H1 (cell line): ENCODE measurements at regions of chr1 and their contacts with region 1.

Region 1: GRCh38 chr1:35646043-35646442 is 4.7 kb upstream of the PSMB2 start:
- DNase-seq: no peak
- H3K4me3 ChIP-seq: no peak overlapping the region
- H3K27ac ChIP-seq: no peak overlapping the region
- H3K4me1 ChIP-seq: no peaks in the 10 kb centered on the region
- H3K27me3 ChIP-seq: no peaks in the 10 kb centered on the region
- CTCF ChIP-seq: peak in 2 of 3 experiments; percentile 23 to 48; a peak in 1 of 4 replicates
- EP300 ChIP-seq: no peak
- POLR2A ChIP-seq: no peak
- RAD21 ChIP-seq: peak; percentile 32 to 48

Region 2: GRCh38 chr1:35488336-35488735 is 157.7 kb before region 1 on chr1:
- CTCF ChIA-PET with region 1: no interaction called
- POLR2A ChIA-PET with region 1: no interaction called
- DNase-seq: no peak
- H3K4me3 ChIP-seq: no peak overlapping the region
- H3K27ac ChIP-seq: no peak overlapping the region
- H3K4me1 ChIP-seq: no peaks in the 10 kb centered on the region
- H3K27me3 ChIP-seq: no peaks in the 10 kb centered on the region
- CTCF ChIP-seq: no peak
- EP300 ChIP-seq: no peak
- POLR2A ChIP-seq: no peak
- RAD21 ChIP-seq: no peak

Region 3: GRCh38 chr1:35595684-35596083 is 50.4 kb before region 1 on chr1:
- CTCF ChIA-PET with region 1: no interaction called
- POLR2A ChIA-PET with region 1: no interaction called
- DNase-seq: no peak
- H3K4me3 ChIP-seq: no peak overlapping the region
- H3K27ac ChIP-seq: no peak overlapping the region
- H3K4me1 ChIP-seq: no peaks in the 10 kb centered on the region
- H3K27me3 ChIP-seq: no peaks in the 10 kb centered on the region
- CTCF ChIP-seq: no peak
- EP300 ChIP-seq: no peak
- POLR2A ChIP-seq: no peak
- RAD21 ChIP-seq: no peak

Region 4: GRCh38 chr1:35660581-35661473 is 14.8 kb after region 1 on chr1:
- CTCF ChIA-PET with region 1: interaction called, 13 read pairs
- POLR2A ChIA-PET with region 1: interaction called, 3 read pairs
- DNase-seq: peak in 1 of 2 experiments; percentile 17
- H3K4me3 ChIP-seq: no peak overlapping the region
- H3K27ac ChIP-seq: no peak overlapping the region
- H3K4me1 ChIP-seq: no peaks in the 10 kb centered on the region
- H3K27me3 ChIP-seq: peaks cover 0 to 2% (median 0%) of the 10 kb centered on the region in 4 experiments; a peak in 1 of 7 replicates
- CTCF ChIP-seq: no peak
- EP300 ChIP-seq: no peak
- POLR2A ChIP-seq: no peak
- RAD21 ChIP-seq: 0 out of 4 replicates have a peak, but pooled peaks of 1 of the 2 experiments have one; percentile 8

Region 5: GRCh38 chr1:35680271-35680670 is 34.2 kb after region 1 on chr1:
- CTCF ChIA-PET with region 1: no interaction called
- POLR2A ChIA-PET with region 1: no interaction called
- DNase-seq: no peak
- H3K4me3 ChIP-seq: no peak overlapping the region
- H3K27ac ChIP-seq: no peak overlapping the region
- H3K4me1 ChIP-seq: no peaks in the 10 kb centered on the region
- H3K27me3 ChIP-seq: no peaks in the 10 kb centered on the region
- CTCF ChIP-seq: no peak
- EP300 ChIP-seq: no peak
- POLR2A ChIP-seq: no peak
- RAD21 ChIP-seq: no peak

Region 6: DNA sequence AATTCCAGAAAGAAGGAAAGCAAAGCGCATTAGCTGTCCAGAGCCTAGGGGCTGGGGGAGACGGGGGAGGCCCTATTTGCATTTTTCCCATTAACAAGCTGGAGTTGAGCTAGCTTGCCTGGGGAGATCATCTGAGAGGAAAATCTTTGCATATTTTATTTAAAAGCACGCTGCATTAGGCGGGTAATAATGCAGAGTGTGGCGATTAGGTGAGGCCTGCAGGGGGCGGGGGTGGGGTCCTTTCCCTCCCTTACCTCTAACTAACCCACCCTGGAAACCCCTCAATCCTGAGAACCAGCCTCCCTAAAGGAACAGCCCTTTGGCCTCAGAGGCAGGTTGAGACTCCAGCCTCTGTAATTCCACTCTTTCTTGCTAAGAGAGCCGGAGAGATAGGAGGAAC is 56.5 kb after region 1 on chr1:
- CTCF ChIA-PET with region 1: interaction called, 12 read pairs
- POLR2A ChIA-PET with region 1: interaction called, 5 read pairs
- DNase-seq: no peak
- H3K4me3 ChIP-seq: peak overlapping the region in 3 of 4 experiments; percentile 13 to 45 (median 32); a peak in 3 of 8 replicates
- H3K27ac ChIP-seq: no peak overlapping the region
- H3K4me1 ChIP-seq: peaks cover 8 to 19% (median 11%) of the 10 kb centered on the region in 4 experiments
- H3K27me3 ChIP-seq: peaks cover 0 to 4% (median 3%) of the 10 kb centered on the region in 4 experiments; a peak in 4 of 7 replicates
- CTCF ChIP-seq: peak; percentile 30 to 41 (median 32)
- EP300 ChIP-seq: no peak
- POLR2A ChIP-seq: no peak
- RAD21 ChIP-seq: peak in 1 of 2 experiments; percentile 21; a peak in 2 of 4 replicates

Region 7: GRCh38 chr1:35835398-35835797 is 189.4 kb after region 1 on chr1:
- CTCF ChIA-PET with region 1: no interaction called
- POLR2A ChIA-PET with region 1: no interaction called
- DNase-seq: no peak
- H3K4me3 ChIP-seq: no peak overlapping the region
- H3K27ac ChIP-seq: no peak overlapping the region
- H3K4me1 ChIP-seq: no peaks in the 10 kb centered on the region
- H3K27me3 ChIP-seq: no peaks in the 10 kb centered on the region
- CTCF ChIP-seq: no peak
- EP300 ChIP-seq: no peak
- POLR2A ChIP-seq: no peak
- RAD21 ChIP-seq: no peak